Dendritic cell treated with granulocyte-macrophage colony-stimulating factor and Interleukin-4, amounts not matched to agents 40 ng/mL and 50 ng/mL, for 4 days (primary cell): ENCODE measurements at regions of chr6 and their contacts with region 1.

Region 1: DNA sequence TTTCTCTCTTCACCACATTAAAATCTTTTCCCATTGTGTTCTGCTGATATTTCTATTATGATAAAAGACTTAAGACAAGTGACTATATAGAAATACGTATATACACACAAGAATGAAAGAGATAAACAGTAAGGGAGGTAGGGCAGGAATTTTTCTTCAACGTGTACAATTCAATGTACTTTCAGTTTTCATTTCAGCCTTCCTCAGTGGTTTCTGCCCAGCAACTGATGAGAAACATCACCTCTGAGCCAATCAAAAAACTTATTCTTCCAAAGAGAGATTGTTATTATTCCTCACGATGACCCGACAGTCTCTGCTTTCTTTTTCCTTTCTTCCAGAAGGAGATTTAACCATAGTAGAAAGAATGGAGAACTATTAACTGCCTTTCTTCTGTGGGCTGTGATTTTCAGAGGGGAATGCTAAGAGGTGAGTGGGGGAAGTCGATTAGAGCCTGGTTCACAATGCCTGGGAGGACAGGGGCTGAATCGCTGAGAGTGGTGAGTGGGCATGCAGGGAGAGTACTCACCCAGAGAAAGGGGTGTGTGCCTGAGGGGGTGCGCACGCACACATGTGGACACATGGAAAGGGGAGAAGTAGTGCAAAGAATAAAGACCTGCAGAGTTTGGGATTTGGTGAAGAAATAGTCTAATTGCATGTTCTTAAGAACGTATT is at the start of gene BTN3A1:
- H3K4me3 Mint-ChIP-seq: peak within 1 kb of the TSS; percentile 84
- H3K27ac Mint-ChIP-seq: peak within 1 kb of the TSS; percentile 85
- H3K4me1 Mint-ChIP-seq: peaks cover 67% of the 10 kb centered on the region
- H3K27me3 Mint-ChIP-seq: no peaks in the 10 kb centered on the region

Region 2: DNA sequence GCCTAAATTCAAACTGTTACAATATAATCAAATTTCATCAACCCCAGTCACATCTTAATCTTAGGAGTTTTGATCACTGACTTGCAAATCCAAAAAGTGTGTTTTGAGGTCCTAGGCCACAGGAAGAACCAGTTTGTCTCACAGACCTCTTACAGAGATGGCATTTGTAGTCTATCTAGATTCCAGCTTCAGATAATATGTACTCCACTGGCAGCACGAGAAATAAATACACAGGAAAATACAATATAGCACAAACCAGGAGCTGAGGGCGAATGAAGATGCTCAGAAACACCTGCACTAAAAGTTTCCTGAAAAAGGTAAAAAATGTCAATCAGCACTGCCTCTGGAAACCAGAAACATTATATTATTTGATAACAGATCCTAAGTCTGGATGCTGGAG is 37.5 kb after region 1 on chr6:
- intact Hi-C with region 1: loop called (anchors 2 kb)
- H3K4me3 Mint-ChIP-seq: peak overlapping the region; percentile 86
- H3K27ac Mint-ChIP-seq: peak overlapping the region; percentile 94
- H3K4me1 Mint-ChIP-seq: peaks cover 19% of the 10 kb centered on the region
- H3K27me3 Mint-ChIP-seq: no peaks in the 10 kb centered on the region